ENCODE measurements at regions of chr7 and their contacts with region 1.

Region 1: DNA sequence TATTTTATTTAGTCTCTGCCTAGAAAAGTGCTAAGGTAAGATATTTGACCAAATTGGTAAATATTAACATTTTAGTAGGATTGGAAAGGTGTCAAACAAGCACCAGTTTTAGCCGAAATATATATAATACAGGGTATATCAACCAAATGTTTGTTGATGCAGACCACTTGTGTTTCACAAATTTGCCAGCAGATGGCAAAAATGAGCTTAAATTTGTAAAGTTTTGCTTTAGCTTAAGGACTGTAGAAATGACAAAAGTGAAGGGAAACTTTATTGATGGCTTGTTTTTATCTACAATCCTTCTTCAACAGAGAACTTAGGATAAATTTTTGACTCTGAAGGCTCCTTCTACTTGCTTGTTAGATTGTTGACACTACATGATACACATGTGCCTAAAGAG is 4.8 kb upstream of the POLR1F start:
- DNase-seq: peak in 7 of 9 experiments; percentile 4 to 71 (median 44)
- ATAC-seq: no peak
- H3K4me3 ChIP-seq: no peak overlapping the region
- H3K4me3 Mint-ChIP-seq: no peak overlapping the region
- H3K27ac ChIP-seq: no peak overlapping the region
- H3K27ac Mint-ChIP-seq: no peak overlapping the region
- H3K4me1 ChIP-seq: peaks cover 8% of the 10 kb centered on the region
- H3K4me1 Mint-ChIP-seq: peaks cover 13% of the 10 kb centered on the region
- H3K27me3 ChIP-seq: no peaks in the 10 kb centered on the region
- H3K27me3 Mint-ChIP-seq: no peaks in the 10 kb centered on the region
- CTCF ChIP-seq: peak; percentile 76

Region 2: GRCh38 chr7:18978108-18978495 is 735.6 kb before region 1 on chr7:
- CTCF ChIA-PET with region 1: no interaction called
- POLR2A ChIA-PET with region 1: no interaction called
- intact Hi-C with region 1: no loop called
- DNase-seq: no peak
- ATAC-seq: no peak
- H3K4me3 ChIP-seq: no peak overlapping the region
- H3K4me3 Mint-ChIP-seq: no peak overlapping the region
- H3K27ac ChIP-seq: no peak overlapping the region
- H3K27ac Mint-ChIP-seq: no peak overlapping the region
- H3K4me1 ChIP-seq: no peaks in the 10 kb centered on the region
- H3K4me1 Mint-ChIP-seq: no peaks in the 10 kb centered on the region
- H3K27me3 ChIP-seq: no peaks in the 10 kb centered on the region
- H3K27me3 Mint-ChIP-seq: no peaks in the 10 kb centered on the region
- CTCF ChIP-seq: no peak

Region 3: DNA sequence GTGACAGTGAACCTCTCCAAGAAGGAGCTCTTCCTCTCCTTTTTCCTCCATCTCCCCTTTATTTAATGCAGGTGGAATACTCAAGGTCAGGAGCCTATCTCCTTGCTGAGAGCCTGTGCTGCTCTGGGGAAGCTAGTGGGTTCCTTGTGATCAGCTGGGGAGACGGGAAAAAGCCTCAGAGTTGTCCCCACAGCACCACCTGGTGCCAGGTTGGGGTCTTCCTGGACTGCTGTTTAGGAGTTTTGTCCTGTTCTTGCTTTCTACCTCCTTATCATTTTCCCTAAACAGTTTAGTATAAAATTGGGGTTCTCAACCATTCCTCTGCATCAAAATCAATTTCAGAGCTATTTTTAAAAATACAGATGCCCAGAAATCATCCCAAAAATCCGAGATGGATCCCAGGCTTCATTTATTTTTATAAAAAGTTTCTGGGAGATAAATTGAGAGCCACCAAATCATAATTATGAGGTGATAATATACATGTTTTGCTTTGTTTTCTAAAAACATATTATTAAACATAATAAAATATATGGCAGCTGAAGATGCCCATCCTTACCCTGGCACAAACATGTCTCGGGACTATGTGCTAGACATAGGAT is 459.2 kb after region 1 on chr7:
- CTCF ChIA-PET with region 1: no interaction called
- POLR2A ChIA-PET with region 1: no interaction called
- intact Hi-C with region 1: loop called (anchors 5 to 10 kb)
- DNase-seq: peak in 2 of 9 experiments; percentile 6 to 23
- ATAC-seq: no peak
- H3K4me3 ChIP-seq: no peak overlapping the region
- H3K4me3 Mint-ChIP-seq: no peak overlapping the region
- H3K27ac ChIP-seq: no peak overlapping the region
- H3K27ac Mint-ChIP-seq: no peak overlapping the region
- H3K4me1 ChIP-seq: no peaks in the 10 kb centered on the region
- H3K4me1 Mint-ChIP-seq: no peaks in the 10 kb centered on the region
- H3K27me3 ChIP-seq: no peaks in the 10 kb centered on the region
- H3K27me3 Mint-ChIP-seq: no peaks in the 10 kb centered on the region
- CTCF ChIP-seq: no peak

Region 4: DNA sequence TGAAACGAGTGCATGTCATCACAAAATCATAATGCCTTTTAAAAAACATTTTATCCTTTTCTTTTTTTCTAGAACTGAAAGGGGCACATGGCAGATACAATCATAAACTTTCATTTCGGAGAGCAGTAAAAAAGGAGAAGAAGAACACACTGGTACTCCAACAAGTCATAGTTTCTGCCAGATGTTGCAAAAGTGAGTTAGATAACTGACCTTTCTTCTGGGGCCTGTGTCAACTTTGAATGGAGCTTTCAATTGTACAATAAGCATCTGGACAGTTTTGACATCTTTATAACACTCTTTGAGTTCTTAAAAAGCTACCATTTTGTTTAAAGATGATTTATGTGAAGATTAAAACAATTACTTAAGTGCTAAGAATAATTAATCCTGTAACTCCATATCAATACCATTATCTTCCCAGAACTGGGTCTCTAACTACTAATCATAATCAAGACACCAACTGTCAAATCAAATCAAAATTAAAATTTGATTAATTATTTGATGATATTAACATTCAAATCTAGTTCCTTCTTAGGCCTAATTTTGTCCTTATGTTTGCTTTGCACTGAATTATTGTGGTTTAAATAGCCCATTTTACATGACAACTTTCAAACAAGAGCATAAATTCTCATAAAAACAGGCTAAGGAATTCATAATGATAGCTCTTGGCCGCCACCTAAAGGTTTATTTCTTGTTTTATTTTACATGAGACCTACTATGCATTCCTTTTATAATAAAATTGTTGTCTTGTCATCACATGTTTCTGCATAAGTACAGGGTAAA is 597.5 kb after region 1 on chr7:
- CTCF ChIA-PET with region 1: no interaction called
- POLR2A ChIA-PET with region 1: no interaction called
- intact Hi-C with region 1: loop called (anchors 1 to 10 kb)
- DNase-seq: peak in 2 of 9 experiments; percentile 21 to 40
- ATAC-seq: no peak
- H3K4me3 ChIP-seq: no peak overlapping the region
- H3K4me3 Mint-ChIP-seq: no peak overlapping the region
- H3K27ac ChIP-seq: no peak overlapping the region
- H3K27ac Mint-ChIP-seq: no peak overlapping the region
- H3K4me1 ChIP-seq: no peaks in the 10 kb centered on the region
- H3K4me1 Mint-ChIP-seq: no peaks in the 10 kb centered on the region
- H3K27me3 ChIP-seq: no peaks in the 10 kb centered on the region
- H3K27me3 Mint-ChIP-seq: peaks cover 2% of the 10 kb centered on the region
- CTCF ChIP-seq: no peak

Region 5: GRCh38 chr7:20598459-20599309 is 885.0 kb after region 1 on chr7:
- CTCF ChIA-PET with region 1: interaction called, 57 read pairs
- POLR2A ChIA-PET with region 1: interaction called, 4 read pairs
- intact Hi-C with region 1: loop called (anchors 1 kb)
- DNase-seq: peak in 2 of 9 experiments; percentile 49 to 65
- ATAC-seq: peak; percentile 57
- H3K4me3 ChIP-seq: no peak overlapping the region
- H3K4me3 Mint-ChIP-seq: no peak overlapping the region
- H3K27ac ChIP-seq: no peak overlapping the region
- H3K27ac Mint-ChIP-seq: no peak overlapping the region
- H3K4me1 ChIP-seq: no peaks in the 10 kb centered on the region
- H3K4me1 Mint-ChIP-seq: peaks cover 3% of the 10 kb centered on the region
- H3K27me3 ChIP-seq: no peaks in the 10 kb centered on the region
- H3K27me3 Mint-ChIP-seq: peaks cover 14% of the 10 kb centered on the region
- CTCF ChIP-seq: peak; percentile 64

Region 6: GRCh38 chr7:21507626-21508343 is 1794.1 kb after region 1 on chr7:
- CTCF ChIA-PET with region 1: no interaction called
- POLR2A ChIA-PET with region 1: no interaction called
- intact Hi-C with region 1: loop called in 1 of 2 experiments (anchors 5 kb)
- DNase-seq: peak in 4 of 9 experiments; percentile 17 to 54 (median 32)
- ATAC-seq: no peak
- H3K4me3 ChIP-seq: no peak overlapping the region
- H3K4me3 Mint-ChIP-seq: no peak overlapping the region
- H3K27ac ChIP-seq: no peak overlapping the region
- H3K27ac Mint-ChIP-seq: no peak overlapping the region
- H3K4me1 ChIP-seq: no peaks in the 10 kb centered on the region
- H3K4me1 Mint-ChIP-seq: no peaks in the 10 kb centered on the region
- H3K27me3 ChIP-seq: no peaks in the 10 kb centered on the region
- H3K27me3 Mint-ChIP-seq: no peaks in the 10 kb centered on the region
- CTCF ChIP-seq: peak; percentile 58

Measured in CD8-positive, alpha-beta T cell (primary cell).